ENCODE measurements at regions of chr12 and their contacts with region 1.

Region 1: DNA sequence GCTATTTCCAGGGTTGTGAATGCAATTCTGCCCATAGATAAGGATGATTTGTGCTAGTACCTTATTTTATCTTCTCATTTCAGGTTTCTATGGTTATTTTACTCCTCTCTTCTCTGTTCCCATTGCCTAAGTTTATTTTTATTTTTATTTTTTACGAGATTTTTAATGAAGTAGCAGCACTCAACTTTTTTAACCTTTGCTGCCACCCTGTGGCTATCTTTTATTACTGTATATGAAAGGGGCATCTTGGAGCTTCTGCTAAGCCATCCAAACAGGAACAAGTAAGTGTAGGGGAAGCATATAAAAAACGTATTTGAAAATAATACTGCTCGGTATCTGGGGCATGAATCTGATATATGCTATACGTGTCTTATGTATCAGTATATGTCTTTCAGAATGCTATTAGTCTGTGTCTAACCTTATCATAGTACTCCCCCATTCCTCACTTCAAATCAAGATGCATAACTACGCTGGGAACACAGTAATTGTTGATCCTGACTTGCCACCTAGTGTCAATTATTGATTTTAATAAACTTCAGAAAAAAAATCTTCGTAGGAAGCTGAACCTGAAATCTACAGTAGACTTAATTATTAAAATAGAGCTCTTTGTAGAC is 60.3 kb downstream of the KLRG1 start:
- DNase-seq: no peak
- ATAC-seq: peak in 3 of 4 donors; percentile 40 to 50 (median 49)
- H3K4me3 ChIP-seq: no peak overlapping the region
- H3K27ac ChIP-seq: no peak overlapping the region
- H3K4me1 ChIP-seq: peaks cover 0 to 4% (median 0%) of the 10 kb centered on the region in 12 donors
- H3K27me3 ChIP-seq: no peaks in the 10 kb centered on the region
- CTCF ChIP-seq: peak; percentile 38 to 64 (median 52)
- POLR2A ChIP-seq: no peak

Region 2: GRCh38 chr12:8544295-8544694 is 505.3 kb before region 1 on chr12:
- intact Hi-C with region 1: loop called in 4 of 10 experiments (anchors 5 to 10 kb)
- DNase-seq: peak in 4 of 5 donors; percentile 51 to 62 (median 56)
- ATAC-seq: peak; percentile 54 to 65 (median 62)
- H3K4me3 ChIP-seq: no peak overlapping the region
- H3K27ac ChIP-seq: no peak overlapping the region
- H3K4me1 ChIP-seq: peaks cover 0 to 9% (median 0%) of the 10 kb centered on the region in 12 donors
- H3K27me3 ChIP-seq: peaks cover 0 to 16% (median 0%) of the 10 kb centered on the region in 9 donors
- CTCF ChIP-seq: peak; percentile 75 to 97 (median 92)
- POLR2A ChIP-seq: no peak

Region 3: GRCh38 chr12:8681041-8681902 is 368.4 kb before region 1 on chr12:
- intact Hi-C with region 1: loop called in 7 of 10 experiments (anchors 5 to 10 kb)
- DNase-seq: peak in 2 of 5 donors; percentile 11 to 30
- ATAC-seq: peak; percentile 62 to 91 (median 66)
- H3K4me3 ChIP-seq: peak overlapping the region in 4 of 12 donors; percentile 11 to 25 (median 16)
- H3K27ac ChIP-seq: peak overlapping the region in 11 of 12 donors; percentile 21 to 73 (median 54)
- H3K4me1 ChIP-seq: peaks cover 0 to 20% (median 0%) of the 10 kb centered on the region in 12 donors
- H3K27me3 ChIP-seq: no peaks in the 10 kb centered on the region
- CTCF ChIP-seq: no peak
- POLR2A ChIP-seq: no peak

Region 4: GRCh38 chr12:8780389-8780788 is 269.2 kb before region 1 on chr12:
- intact Hi-C with region 1: loop called in 2 of 10 experiments (anchors 10 kb)
- DNase-seq: no peak
- ATAC-seq: peak in 1 of 4 donors; percentile 63
- H3K4me3 ChIP-seq: no peak overlapping the region
- H3K27ac ChIP-seq: no peak overlapping the region
- H3K4me1 ChIP-seq: peaks cover 0 to 26% (median 4%) of the 10 kb centered on the region in 12 donors
- H3K27me3 ChIP-seq: no peaks in the 10 kb centered on the region
- CTCF ChIP-seq: peak in 11 of 12 donors; percentile 6 to 50 (median 38)
- POLR2A ChIP-seq: no peak

Region 5: DNA sequence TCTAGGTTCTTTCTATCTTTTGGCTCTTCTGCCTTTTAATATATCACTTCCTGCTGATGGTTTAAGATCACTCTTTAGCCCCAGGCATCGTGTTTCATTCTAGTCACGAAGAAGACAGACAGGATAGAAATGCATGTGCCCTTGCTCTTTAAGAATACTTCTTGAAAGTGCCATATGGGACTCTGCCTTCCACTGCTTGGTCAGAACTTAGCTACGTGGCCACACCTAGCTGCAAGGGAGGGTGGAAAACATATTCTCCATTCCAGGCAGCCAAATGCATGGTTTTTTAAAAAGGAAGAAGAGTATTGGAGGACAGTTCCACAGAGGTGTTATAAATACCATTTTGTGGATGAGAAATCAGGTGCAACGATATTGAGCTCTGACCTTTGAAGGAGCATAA is 414.8 kb after region 1 on chr12:
- intact Hi-C with region 1: loop called in 1 of 10 experiments (anchors 10 kb)
- DNase-seq: no peak
- ATAC-seq: no peak
- H3K4me3 ChIP-seq: no peak overlapping the region
- H3K27ac ChIP-seq: no peak overlapping the region
- H3K4me1 ChIP-seq: no peaks in the 10 kb centered on the region
- H3K27me3 ChIP-seq: no peaks in the 10 kb centered on the region
- CTCF ChIP-seq: no peak
- POLR2A ChIP-seq: no peak